PC-3 (cell line): ENCODE measurements at regions of chr15 and their contacts with region 1.

Region 1: GRCh38 chr15:82122746-82123400 is 77.1 kb upstream of the MEX3B start:
- DNase-seq: peak; percentile 93
- ATAC-seq: peak; percentile 98
- H3K4me3 ChIP-seq: no peak overlapping the region
- H3K27ac ChIP-seq: peak overlapping the region; percentile 60
- H3K4me1 ChIP-seq: peaks cover 19% of the 10 kb centered on the region
- H3K27me3 ChIP-seq: no peaks in the 10 kb centered on the region
- CTCF ChIP-seq: no peak

Region 2: GRCh38 chr15:82135638-82136037 is 12.8 kb after region 1 on chr15:
- CTCF ChIA-PET with region 1: no interaction called
- POLR2A ChIA-PET with region 1: no interaction called
- intact Hi-C with region 1: no loop called
- DNase-seq: no peak
- ATAC-seq: no peak
- H3K4me3 ChIP-seq: no peak overlapping the region
- H3K27ac ChIP-seq: no peak overlapping the region
- H3K4me1 ChIP-seq: peaks cover 32% of the 10 kb centered on the region
- H3K27me3 ChIP-seq: no peaks in the 10 kb centered on the region
- CTCF ChIP-seq: no peak

Region 3: DNA sequence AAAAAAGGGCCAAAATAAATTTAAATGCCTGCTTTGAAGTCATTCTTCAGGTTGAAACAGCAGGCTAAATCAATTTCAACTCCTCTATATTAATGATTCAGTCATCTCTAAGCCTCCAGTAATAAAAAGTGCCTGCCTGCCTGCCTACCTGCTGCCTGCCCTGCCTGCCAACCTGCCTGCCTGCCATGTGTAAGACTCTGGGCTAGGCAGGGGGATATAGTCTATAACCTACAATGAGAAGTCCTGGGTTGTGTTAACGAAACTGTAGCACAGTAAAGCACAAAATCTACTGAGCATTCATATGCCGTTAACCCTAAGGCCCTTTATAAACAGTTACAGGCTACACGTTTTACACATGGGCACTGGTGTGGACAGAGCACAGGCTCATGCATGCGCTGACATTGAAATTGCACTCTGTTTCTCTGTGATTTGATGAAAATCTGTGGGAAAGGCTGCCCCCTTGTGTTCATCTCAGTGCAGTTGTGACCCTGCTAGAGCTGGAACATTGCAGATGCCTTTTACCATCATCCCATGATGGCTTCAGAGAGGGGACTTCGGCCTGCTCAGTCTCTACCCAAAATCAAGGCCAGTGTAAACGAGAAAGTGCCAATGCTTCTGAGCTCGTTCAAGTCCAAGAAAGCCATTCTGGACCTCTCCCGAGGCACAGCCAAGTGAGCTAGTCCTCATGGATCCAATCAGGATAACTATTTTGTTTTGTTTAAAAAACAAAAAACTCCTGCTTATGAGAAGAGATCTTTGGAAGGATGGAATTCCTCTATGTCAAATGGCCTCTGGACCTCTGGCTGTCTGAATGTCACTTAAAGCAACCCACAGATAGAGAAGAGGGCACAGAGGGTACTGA is 75.1 kb after region 1 on chr15:
- CTCF ChIA-PET with region 1: no interaction called
- POLR2A ChIA-PET with region 1: no interaction called
- intact Hi-C with region 1: loop called (anchors 5 kb)
- DNase-seq: peak; percentile 81
- ATAC-seq: peak; percentile 96
- H3K4me3 ChIP-seq: no peak overlapping the region
- H3K27ac ChIP-seq: no peak overlapping the region
- H3K4me1 ChIP-seq: no peaks in the 10 kb centered on the region
- H3K27me3 ChIP-seq: no peaks in the 10 kb centered on the region
- CTCF ChIP-seq: peak; percentile 80